ENCODE measurements at regions of chr4 and their contacts with region 1.

Region 1: GRCh38 chr4:102789317-102789717 is 28.5 kb upstream of the MANBA start:
- DNase-seq: peak; percentile 14
- H3K4me3 Mint-ChIP-seq: no peak overlapping the region
- H3K27ac Mint-ChIP-seq: peak overlapping the region; percentile 67
- H3K4me1 Mint-ChIP-seq: peaks cover 46% of the 10 kb centered on the region
- H3K27me3 Mint-ChIP-seq: no peaks in the 10 kb centered on the region

Region 2: GRCh38 chr4:102730968-102731534 is 58.3 kb before region 1 on chr4:
- CTCF ChIA-PET with region 1: no interaction called
- POLR2A ChIA-PET with region 1: no interaction called
- intact Hi-C with region 1: no loop called
- DNase-seq: no peak
- H3K4me3 Mint-ChIP-seq: no peak overlapping the region
- H3K27ac Mint-ChIP-seq: no peak overlapping the region
- H3K4me1 Mint-ChIP-seq: peaks cover 11% of the 10 kb centered on the region
- H3K27me3 Mint-ChIP-seq: no peaks in the 10 kb centered on the region

Region 3: GRCh38 chr4:102772738-102773340 is 16.5 kb before region 1 on chr4:
- CTCF ChIA-PET with region 1: no interaction called
- POLR2A ChIA-PET with region 1: no interaction called
- intact Hi-C with region 1: no loop called
- DNase-seq: no peak
- H3K4me3 Mint-ChIP-seq: no peak overlapping the region
- H3K27ac Mint-ChIP-seq: no peak overlapping the region
- H3K4me1 Mint-ChIP-seq: no peaks in the 10 kb centered on the region
- H3K27me3 Mint-ChIP-seq: no peaks in the 10 kb centered on the region

Region 4: GRCh38 chr4:102809190-102809589 is 19.9 kb after region 1 on chr4:
- CTCF ChIA-PET with region 1: no interaction called
- POLR2A ChIA-PET with region 1: interaction called, 3 read pairs
- intact Hi-C with region 1: loop called (anchors 2 kb)
- DNase-seq: no peak
- H3K4me3 Mint-ChIP-seq: no peak overlapping the region
- H3K27ac Mint-ChIP-seq: peak overlapping the region; percentile 61
- H3K4me1 Mint-ChIP-seq: peaks cover 80% of the 10 kb centered on the region
- H3K27me3 Mint-ChIP-seq: no peaks in the 10 kb centered on the region

Region 5: DNA sequence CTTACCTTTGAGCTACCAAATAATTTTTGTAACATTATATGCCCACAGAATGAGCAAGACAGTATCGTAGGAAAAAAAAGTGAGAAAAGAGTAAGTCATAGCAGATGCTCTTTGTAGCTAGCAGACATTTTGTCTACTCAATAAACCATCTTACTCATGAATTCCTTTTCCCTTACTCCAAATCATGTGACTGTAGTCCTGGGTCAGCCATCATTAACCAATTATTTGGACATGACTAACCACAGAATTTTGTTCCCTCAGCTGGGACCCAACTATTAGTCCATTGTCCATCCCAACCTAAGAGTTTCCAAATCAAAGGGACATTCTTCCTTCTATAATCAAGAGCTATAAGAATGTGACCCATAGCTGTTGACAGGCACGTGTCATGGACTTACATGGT is 26.7 kb after region 1 on chr4:
- CTCF ChIA-PET with region 1: interaction called, 4 read pairs
- POLR2A ChIA-PET with region 1: interaction called, 9 read pairs
- intact Hi-C with region 1: loop called (anchors 1 kb)
- DNase-seq: no peak
- H3K4me3 Mint-ChIP-seq: no peak overlapping the region
- H3K27ac Mint-ChIP-seq: peak overlapping the region; percentile 82
- H3K4me1 Mint-ChIP-seq: peaks cover 86% of the 10 kb centered on the region
- H3K27me3 Mint-ChIP-seq: no peaks in the 10 kb centered on the region

Region 6: GRCh38 chr4:103673983-103674382 is 884.7 kb after region 1 on chr4:
- CTCF ChIA-PET with region 1: no interaction called
- POLR2A ChIA-PET with region 1: no interaction called
- intact Hi-C with region 1: no loop called
- DNase-seq: no peak
- H3K4me3 Mint-ChIP-seq: no peak overlapping the region
- H3K27ac Mint-ChIP-seq: no peak overlapping the region
- H3K4me1 Mint-ChIP-seq: no peaks in the 10 kb centered on the region
- H3K27me3 Mint-ChIP-seq: no peaks in the 10 kb centered on the region

Measured in activated CD4-positive, alpha-beta memory T cell treated with anti-CD3 and anti-CD28 coated beads for 36 hours (primary cell).